ENCODE measurements at regions of chr3 and their contacts with region 1.

Region 1: DNA sequence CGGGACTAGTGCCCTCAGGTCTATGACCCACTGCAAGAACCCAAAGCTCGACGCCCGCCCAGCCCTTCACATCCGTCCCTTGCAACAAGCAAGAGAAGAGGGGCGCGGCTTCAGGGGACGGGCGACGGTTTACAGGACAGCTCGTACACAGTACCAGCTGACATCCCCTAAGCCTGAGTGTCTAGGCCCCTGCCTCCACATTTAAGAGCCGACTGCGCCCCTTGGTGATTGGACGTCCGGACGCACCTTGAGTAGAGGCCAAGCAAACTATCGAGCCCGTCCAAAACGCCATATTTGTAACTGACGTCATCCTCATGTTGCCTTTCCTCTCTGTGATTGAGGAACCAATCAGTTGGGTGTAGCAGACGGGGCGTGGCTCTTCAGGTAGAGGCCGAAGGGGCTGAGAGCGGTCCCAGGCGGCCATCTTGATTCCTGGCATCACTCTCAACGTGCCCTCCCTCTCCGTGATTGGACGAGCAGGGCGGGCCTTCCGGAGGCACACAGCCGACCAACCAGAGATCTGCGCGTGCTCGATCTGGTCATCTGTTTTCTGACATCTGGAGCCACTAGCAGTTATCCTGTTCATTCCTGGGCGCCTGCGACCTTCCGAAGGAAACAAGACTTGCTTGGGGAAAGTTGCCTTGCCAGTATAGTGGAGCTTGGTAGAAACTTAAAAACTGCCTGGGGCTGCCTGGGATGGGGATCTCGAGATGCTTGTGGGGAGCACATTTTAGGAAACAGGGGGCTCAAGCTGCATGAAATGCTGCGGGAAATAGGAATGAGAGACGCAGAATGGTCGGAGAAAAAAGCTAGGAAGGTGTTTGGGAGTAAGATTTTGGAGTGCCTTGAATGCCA is 4.0 kb upstream of the RPL14 start:
- DNase-seq: peak; percentile 98
- ATAC-seq: peak; percentile 95
- H3K4me3 ChIP-seq: peak overlapping the region; percentile 65 to 86 (median 79)
- H3K27ac ChIP-seq: peak overlapping the region; percentile 86
- H3K4me1 ChIP-seq: peaks cover 41% of the 10 kb centered on the region
- H3K27me3 ChIP-seq: no peaks in the 10 kb centered on the region; a peak in 1 of 5 replicates
- CTCF ChIP-seq: peak; percentile 52
- EP300 ChIP-seq: peak in 1 of 2 experiments; percentile 68; a peak in 2 of 4 replicates
- POLR2A ChIP-seq: peak; percentile 81 to 82
- RAD21 ChIP-seq: no peak; the same call in none of the 2 replicates

Region 2: DNA sequence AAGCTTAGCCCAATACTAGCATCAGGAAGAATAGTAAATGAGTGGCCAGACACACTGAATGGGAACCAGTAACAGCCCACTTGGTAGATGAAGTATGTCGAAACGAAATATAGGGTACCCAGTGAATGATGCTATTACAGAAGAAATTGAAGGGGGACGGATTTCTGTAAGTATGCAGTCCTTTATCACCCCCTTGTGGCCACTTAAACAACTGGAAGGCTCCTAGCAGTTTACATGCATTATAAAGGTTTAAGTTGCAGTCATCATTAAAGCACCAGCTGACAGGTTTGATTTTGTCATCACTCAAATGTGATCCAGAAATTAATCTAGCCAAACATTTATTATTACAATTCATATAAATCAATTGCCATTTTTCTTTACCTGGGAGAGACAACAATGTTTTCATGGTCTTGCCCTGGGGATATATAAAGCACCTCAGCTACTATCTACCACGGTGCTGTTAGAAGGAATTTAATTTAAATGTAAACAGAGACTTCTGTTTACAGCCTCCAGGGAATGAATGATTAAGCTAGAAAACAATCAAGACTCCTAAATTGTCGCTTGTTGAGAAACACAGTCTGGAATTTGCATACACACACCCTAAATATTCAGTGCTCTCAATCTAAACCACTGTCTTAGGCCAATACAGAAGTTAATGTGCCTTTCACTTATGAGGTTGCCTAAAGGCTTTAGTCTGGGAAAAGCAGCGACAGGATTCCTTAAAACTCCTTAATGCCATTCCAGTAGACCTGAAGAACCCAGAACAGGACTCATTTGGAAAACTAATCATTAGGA is 135.8 kb before region 1 on chr3:
- CTCF ChIA-PET with region 1: no interaction called
- POLR2A ChIA-PET with region 1: no interaction called
- in situ Hi-C with region 1: loop called (anchors 10 kb)
- intact Hi-C with region 1: no loop called
- DNase-seq: peak; percentile 60
- ATAC-seq: peak; percentile 64
- H3K4me3 ChIP-seq: no peak overlapping the region
- H3K27ac ChIP-seq: no peak overlapping the region
- H3K4me1 ChIP-seq: peaks cover 23% of the 10 kb centered on the region
- H3K27me3 ChIP-seq: no peaks in the 10 kb centered on the region
- CTCF ChIP-seq: peak; percentile 79
- EP300 ChIP-seq: no peak
- POLR2A ChIP-seq: no peak
- RAD21 ChIP-seq: peak; percentile 76

Region 3: DNA sequence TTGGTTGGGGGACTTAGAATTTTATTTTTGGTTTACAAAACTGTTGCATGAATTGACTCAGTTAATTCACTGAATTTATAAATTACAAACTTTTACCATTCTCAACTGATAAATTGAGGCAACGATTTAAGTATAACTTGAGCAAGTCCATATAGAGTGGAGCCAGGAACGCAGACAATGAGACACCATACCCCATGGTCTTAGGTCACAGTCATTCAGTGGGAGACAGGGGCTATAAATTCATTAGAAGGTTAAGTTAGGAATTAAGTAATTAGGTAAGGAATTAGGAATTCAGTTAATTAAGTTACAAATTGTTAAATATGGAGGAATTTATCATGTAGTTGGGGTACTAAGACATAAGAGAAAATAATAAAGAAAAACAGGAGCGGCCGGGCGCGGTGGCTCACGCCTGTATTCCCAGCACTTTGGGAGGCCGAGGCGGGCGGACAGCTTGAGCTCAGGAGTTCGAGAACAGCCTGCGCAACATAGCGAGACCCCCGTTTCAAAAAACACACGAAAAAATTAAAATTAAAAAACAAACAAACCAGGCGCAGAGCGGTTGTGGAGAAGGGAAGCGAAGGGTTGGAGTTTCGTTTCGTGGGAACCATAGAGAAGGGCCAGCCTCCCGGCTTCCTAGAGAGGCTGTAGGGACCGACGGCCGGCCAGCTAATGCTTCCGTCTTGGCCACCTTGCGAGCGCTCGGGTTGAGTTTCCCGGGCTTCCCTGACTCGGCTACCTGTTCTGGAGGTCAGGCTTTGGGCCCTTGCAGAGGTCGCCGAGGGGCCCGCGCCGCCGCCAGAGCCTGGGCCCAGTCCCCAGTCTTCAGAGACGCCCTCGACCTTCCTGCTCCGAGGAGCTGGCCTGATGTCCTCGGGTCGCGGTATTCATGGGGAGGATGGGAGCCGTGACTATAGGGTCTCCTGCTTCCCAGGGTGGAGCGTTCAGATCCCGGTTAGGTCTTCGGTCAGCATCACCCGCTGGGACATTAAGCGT is 23.7 kb after region 1 on chr3 and contains the start of gene ZNF619:
- CTCF ChIA-PET with region 1: no interaction called
- POLR2A ChIA-PET with region 1: interaction called, 24 read pairs
- in situ Hi-C with region 1: no loop called
- intact Hi-C with region 1: no loop called
- DNase-seq: peak; percentile 59
- ATAC-seq: peak; percentile 92
- H3K4me3 ChIP-seq: peak within 1 kb of the TSS; percentile 95 to 96 (median 95)
- H3K27ac ChIP-seq: peak within 1 kb of the TSS; percentile 51
- H3K4me1 ChIP-seq: peaks cover 19% of the 10 kb centered on the region
- H3K27me3 ChIP-seq: no peaks in the 10 kb centered on the region; a peak in 1 of 5 replicates
- CTCF ChIP-seq: peak; percentile 8; the same call in 1 of the 2 replicates
- EP300 ChIP-seq: no peak
- POLR2A ChIP-seq: peak; percentile 43 to 51; a peak in 2 of 4 replicates
- RAD21 ChIP-seq: peak; percentile 29; the same call in 1 of the 2 replicates
- total RNA-seq, gene ZNF619: 4.9 and 5.2 TPM in 2 replicates

Region 4: GRCh38 chr3:40524568-40525285 is 71.6 kb after region 1 on chr3 and contains the start of gene ZNF621:
- CTCF ChIA-PET with region 1: no interaction called
- POLR2A ChIA-PET with region 1: interaction called, 16 read pairs
- in situ Hi-C with region 1: no loop called
- intact Hi-C with region 1: loop called (anchors 2 kb)
- DNase-seq: peak; percentile 75
- ATAC-seq: peak; percentile 99
- H3K4me3 ChIP-seq: peak within 1 kb of the TSS; percentile 98 to 99 (median 99)
- H3K27ac ChIP-seq: peak within 1 kb of the TSS; percentile 86
- H3K4me1 ChIP-seq: peaks cover 34% of the 10 kb centered on the region
- H3K27me3 ChIP-seq: no peaks in the 10 kb centered on the region; a peak in 1 of 5 replicates
- CTCF ChIP-seq: peak; percentile 59
- EP300 ChIP-seq: no peak
- POLR2A ChIP-seq: peak; percentile 94
- RAD21 ChIP-seq: peak; percentile 45; the same call in 1 of the 2 replicates
- total RNA-seq, gene ZNF621: 13.2 and 16.5 TPM in 2 replicates

Measured in HepG2 (cell line).